Activated CD4-positive, alpha-beta T cell treated with anti-CD3 and anti-CD28 coated beads for 36 hours (primary cell): ENCODE measurements at regions of chr1 and their contacts with region 1.

Region 1: GRCh38 chr1:88935522-88936222 is 44.3 kb upstream of the GTF2B start:
- DNase-seq: peak; percentile 11
- ATAC-seq: peak; percentile 53
- H3K4me3 Mint-ChIP-seq: no peak overlapping the region
- H3K27ac Mint-ChIP-seq: no peak overlapping the region
- H3K4me1 Mint-ChIP-seq: no peaks in the 10 kb centered on the region
- H3K27me3 Mint-ChIP-seq: no peaks in the 10 kb centered on the region

Region 2: GRCh38 chr1:88800382-88801051 is 135.2 kb before region 1 on chr1:
- CTCF ChIA-PET with region 1: no interaction called
- POLR2A ChIA-PET with region 1: no interaction called
- intact Hi-C with region 1: loop called in 1 of 2 experiments (anchors 5 kb)
- DNase-seq: peak; percentile 59
- ATAC-seq: peak; percentile 76
- H3K4me3 Mint-ChIP-seq: no peak overlapping the region
- H3K27ac Mint-ChIP-seq: peak overlapping the region; percentile 39
- H3K4me1 Mint-ChIP-seq: peaks cover 4% of the 10 kb centered on the region
- H3K27me3 Mint-ChIP-seq: no peaks in the 10 kb centered on the region

Region 3: GRCh38 chr1:88973520-88974137 is 38.0 kb after region 1 on chr1:
- CTCF ChIA-PET with region 1: no interaction called
- POLR2A ChIA-PET with region 1: no interaction called
- intact Hi-C with region 1: no loop called
- DNase-seq: no peak
- ATAC-seq: peak; percentile 20
- H3K4me3 Mint-ChIP-seq: no peak overlapping the region
- H3K27ac Mint-ChIP-seq: no peak overlapping the region
- H3K4me1 Mint-ChIP-seq: peaks cover 37% of the 10 kb centered on the region
- H3K27me3 Mint-ChIP-seq: no peaks in the 10 kb centered on the region

Region 4: GRCh38 chr1:89203166-89203565 is 267.5 kb after region 1 on chr1:
- CTCF ChIA-PET with region 1: no interaction called
- POLR2A ChIA-PET with region 1: no interaction called
- intact Hi-C with region 1: no loop called
- DNase-seq: no peak
- ATAC-seq: peak; percentile 20
- H3K4me3 Mint-ChIP-seq: no peak overlapping the region
- H3K27ac Mint-ChIP-seq: no peak overlapping the region
- H3K4me1 Mint-ChIP-seq: peaks cover 43% of the 10 kb centered on the region
- H3K27me3 Mint-ChIP-seq: no peaks in the 10 kb centered on the region